Heart left ventricle (tissue), 16 donors: ENCODE measurements at regions of chr3 and their contacts with region 1.

Region 1: GRCh38 chr3:169863458-169863899 is 6.3 kb downstream of the LRRC31 start:
- DNase-seq: peak in 4 of 5 donors; percentile 42 to 57 (median 44)
- ATAC-seq: peak; percentile 37 to 81 (median 77)
- H3K4me3 ChIP-seq: no peak overlapping the region
- H3K27ac ChIP-seq: no peak overlapping the region
- H3K4me1 ChIP-seq: peaks cover 0 to 7% (median 0%) of the 10 kb centered on the region in 12 donors
- H3K27me3 ChIP-seq: peaks cover 0 to 2% (median 0%) of the 10 kb centered on the region in 9 donors
- CTCF ChIP-seq: peak; percentile 87 to 96 (median 91)
- POLR2A ChIP-seq: no peak

Region 2: GRCh38 chr3:169914321-169914720 is 50.8 kb after region 1 on chr3:
- intact Hi-C with region 1: no loop called
- DNase-seq: no peak
- ATAC-seq: peak in 2 of 4 donors; percentile 51 to 73
- H3K4me3 ChIP-seq: no peak overlapping the region
- H3K27ac ChIP-seq: no peak overlapping the region
- H3K4me1 ChIP-seq: peaks cover 0 to 10% (median 0%) of the 10 kb centered on the region in 12 donors
- H3K27me3 ChIP-seq: no peaks in the 10 kb centered on the region
- CTCF ChIP-seq: no peak
- POLR2A ChIP-seq: no peak

Region 3: DNA sequence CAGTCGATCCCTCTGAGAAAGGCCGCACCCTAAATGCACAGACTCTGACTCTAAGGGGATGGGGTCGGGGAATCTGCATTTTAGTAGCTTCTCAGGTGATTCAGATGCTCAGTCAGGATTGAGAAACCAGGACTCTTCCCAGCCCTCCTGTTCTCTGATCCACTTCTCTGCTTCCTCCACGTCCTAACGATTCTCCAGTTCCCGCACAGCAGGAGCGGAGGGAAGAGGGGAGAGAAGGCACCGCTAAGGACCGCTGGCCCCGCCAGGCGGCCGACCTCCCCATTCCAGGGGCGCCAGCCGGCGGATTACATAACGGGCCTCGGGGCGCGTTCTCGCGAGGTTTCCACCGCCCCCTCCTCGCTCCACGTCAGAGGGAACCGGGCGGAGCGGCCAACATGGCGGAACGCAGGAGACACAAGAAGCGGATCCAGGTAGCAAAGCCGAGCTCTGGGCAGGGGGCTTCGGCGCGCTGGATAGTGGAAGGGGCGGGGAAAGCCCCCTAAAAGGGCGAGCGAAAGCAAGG is 103.0 kb after region 1 on chr3 and contains the start of gene SEC62:
- intact Hi-C with region 1: loop called (anchors 1 to 10 kb)
- DNase-seq: peak; percentile 95 to 98 (median 96)
- ATAC-seq: peak; percentile 98 to 99 (median 98)
- H3K4me3 ChIP-seq: peak within 1 kb of the TSS; percentile 65 to 99 (median 84)
- H3K27ac ChIP-seq: peak within 1 kb of the TSS; percentile 90 to 99 (median 94)
- H3K4me1 ChIP-seq: peaks cover 2 to 47% (median 35%) of the 10 kb centered on the region in 12 donors
- H3K27me3 ChIP-seq: no peaks in the 10 kb centered on the region
- CTCF ChIP-seq: peak; percentile 24 to 76 (median 47)
- POLR2A ChIP-seq: peak in 1 of 2 donors; percentile 83
- total RNA-seq, gene SEC62: 29.5 to 104 (median 75.2) TPM

Region 4: GRCh38 chr3:169984292-169984691 is 120.8 kb after region 1 on chr3:
- intact Hi-C with region 1: no loop called
- DNase-seq: peak in 1 of 5 donors; percentile 29
- ATAC-seq: no peak
- H3K4me3 ChIP-seq: no peak overlapping the region
- H3K27ac ChIP-seq: no peak overlapping the region
- H3K4me1 ChIP-seq: peaks cover 0 to 6% (median 0%) of the 10 kb centered on the region in 12 donors
- H3K27me3 ChIP-seq: no peaks in the 10 kb centered on the region
- CTCF ChIP-seq: no peak
- POLR2A ChIP-seq: no peak

Region 5: GRCh38 chr3:170037463-170038433 is 174.3 kb after region 1 on chr3 and contains the start of gene GPR160:
- intact Hi-C with region 1: loop called in 2 of 10 experiments (anchors 5 to 10 kb)
- DNase-seq: peak; percentile 60 to 91 (median 76)
- ATAC-seq: peak in 3 of 4 donors; percentile 87 to 89 (median 88)
- H3K4me3 ChIP-seq: peak within 1 kb of the TSS; percentile 42 to 85 (median 70)
- H3K27ac ChIP-seq: peak within 1 kb of the TSS in 2 of 12 donors; percentile 14 to 30
- H3K4me1 ChIP-seq: peaks cover 0 to 18% (median 10%) of the 10 kb centered on the region in 12 donors
- H3K27me3 ChIP-seq: peaks cover 0 to 36% (median 14%) of the 10 kb centered on the region in 9 donors
- CTCF ChIP-seq: peak; percentile 54 to 78 (median 64)
- POLR2A ChIP-seq: peak in 1 of 2 donors; percentile 19
- total RNA-seq, gene GPR160: 0.28 to 2.6 (median 0.99) TPM

Region 6: GRCh38 chr3:170079536-170080165 is 216.2 kb after region 1 on chr3:
- intact Hi-C with region 1: loop called in 1 of 10 experiments (anchors 10 kb)
- DNase-seq: no peak
- ATAC-seq: no peak
- H3K4me3 ChIP-seq: no peak overlapping the region
- H3K27ac ChIP-seq: no peak overlapping the region
- H3K4me1 ChIP-seq: peaks cover 0 to 8% (median 0%) of the 10 kb centered on the region in 12 donors
- H3K27me3 ChIP-seq: no peaks in the 10 kb centered on the region
- CTCF ChIP-seq: no peak
- POLR2A ChIP-seq: no peak

Region 7: GRCh38 chr3:170414202-170414663 is 550.8 kb after region 1 on chr3:
- intact Hi-C with region 1: loop called in 1 of 10 experiments (anchors 5 kb)
- DNase-seq: peak in 2 of 5 donors; percentile 30 to 32
- ATAC-seq: peak; percentile 50 to 53 (median 52)
- H3K4me3 ChIP-seq: no peak overlapping the region
- H3K27ac ChIP-seq: no peak overlapping the region
- H3K4me1 ChIP-seq: peaks cover 0 to 13% (median 8%) of the 10 kb centered on the region in 12 donors
- H3K27me3 ChIP-seq: peaks cover 0 to 21% (median 17%) of the 10 kb centered on the region in 9 donors
- CTCF ChIP-seq: peak; percentile 80 to 97 (median 94)
- POLR2A ChIP-seq: no peak